HEK293 (cell line): ENCODE measurements at regions of chr1 and their contacts with region 1.

Region 1: GRCh38 chr1:61842036-61842435 is 99.8 kb downstream of the PATJ start:
- H3K4me3 ChIP-seq: no peak overlapping the region
- H3K27ac ChIP-seq: no peak overlapping the region
- H3K4me1 ChIP-seq: no peaks in the 10 kb centered on the region
- CTCF ChIP-seq: no peak

Region 2: DNA sequence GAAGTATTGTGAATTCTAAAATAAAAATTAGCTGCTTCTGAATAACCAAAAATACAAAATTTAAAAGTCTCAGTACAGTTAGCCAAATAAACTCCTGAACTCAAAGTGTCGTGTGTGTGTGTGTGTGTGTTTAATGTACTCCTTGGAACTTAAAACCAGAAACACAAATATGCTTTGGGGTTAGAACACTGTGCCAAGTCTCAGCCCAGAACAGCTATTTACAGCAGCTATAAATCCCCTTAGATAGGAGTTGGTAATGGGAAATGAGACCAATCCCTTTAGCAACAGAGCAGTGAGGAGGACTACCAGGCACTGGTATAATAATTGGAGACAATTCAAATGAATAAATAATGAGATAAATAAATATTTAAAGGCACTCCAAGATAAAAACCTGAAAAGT is 16.6 kb before region 1 on chr1:
- CTCF ChIA-PET with region 1: interaction called, 10 read pairs
- POLR2A ChIA-PET with region 1: no interaction called
- H3K4me3 ChIP-seq: no peak overlapping the region
- H3K27ac ChIP-seq: no peak overlapping the region
- H3K4me1 ChIP-seq: no peaks in the 10 kb centered on the region
- CTCF ChIP-seq: no peak

Region 3: DNA sequence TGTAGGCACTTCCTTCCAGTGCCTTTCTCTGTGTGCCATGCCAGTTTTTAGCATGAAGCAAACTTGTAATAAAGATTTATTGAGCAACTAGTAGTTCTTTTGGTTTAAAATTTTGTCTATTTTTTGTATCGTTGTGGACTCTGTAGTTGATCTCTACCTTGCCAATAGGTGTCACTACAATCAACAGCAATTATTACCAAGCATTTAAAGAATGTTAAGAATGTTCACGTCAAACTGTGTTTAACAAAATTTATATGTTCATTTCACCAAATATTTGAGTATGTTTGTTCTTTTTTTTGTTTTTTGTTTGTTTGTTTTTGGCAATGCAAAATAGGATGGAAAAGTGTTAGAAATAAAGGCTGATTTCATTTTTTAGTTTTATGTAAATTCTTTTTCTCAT is 108.4 kb after region 1 on chr1:
- CTCF ChIA-PET with region 1: no interaction called
- POLR2A ChIA-PET with region 1: no interaction called
- H3K4me3 ChIP-seq: no peak overlapping the region
- H3K27ac ChIP-seq: no peak overlapping the region
- H3K4me1 ChIP-seq: 0 out of 2 replicates have a peak, but pooled peaks cover 2% of the 10 kb centered on the region
- CTCF ChIP-seq: no peak